GM12878 (cell line): ENCODE measurements at regions of chr5 and their contacts with region 1.

Region 1: GRCh38 chr5:79133657-79134451 is 22.2 kb downstream of the BHMT start:
- DNase-seq: peak; percentile 24
- ATAC-seq: peak; percentile 89
- H3K4me3 ChIP-seq: no peak overlapping the region
- H3K27ac ChIP-seq: no peak overlapping the region
- H3K4me1 ChIP-seq: peaks cover 17% of the 10 kb centered on the region
- H3K27me3 ChIP-seq: no peaks in the 10 kb centered on the region
- CTCF ChIP-seq: peak; percentile 70 to 83 (median 74)
- EP300 ChIP-seq: no peak
- POLR2A ChIP-seq: no peak
- RAD21 ChIP-seq: peak; percentile 93

Region 2: GRCh38 chr5:78824831-78825281 is 309.0 kb before region 1 on chr5:
- CTCF ChIA-PET with region 1: no interaction called
- POLR2A ChIA-PET with region 1: no interaction called
- RAD21 ChIA-PET with region 1: no interaction called
- SMC1A ChIA-PET with region 1: no interaction called
- in situ Hi-C with region 1: no loop called
- intact Hi-C with region 1: no loop called
- DNase-seq: no peak
- ATAC-seq: no peak
- H3K4me3 ChIP-seq: no peak overlapping the region
- H3K27ac ChIP-seq: no peak overlapping the region
- H3K4me1 ChIP-seq: peaks cover 10% of the 10 kb centered on the region
- H3K27me3 ChIP-seq: no peaks in the 10 kb centered on the region
- CTCF ChIP-seq: no peak
- EP300 ChIP-seq: no peak
- POLR2A ChIP-seq: no peak
- RAD21 ChIP-seq: no peak

Region 3: DNA sequence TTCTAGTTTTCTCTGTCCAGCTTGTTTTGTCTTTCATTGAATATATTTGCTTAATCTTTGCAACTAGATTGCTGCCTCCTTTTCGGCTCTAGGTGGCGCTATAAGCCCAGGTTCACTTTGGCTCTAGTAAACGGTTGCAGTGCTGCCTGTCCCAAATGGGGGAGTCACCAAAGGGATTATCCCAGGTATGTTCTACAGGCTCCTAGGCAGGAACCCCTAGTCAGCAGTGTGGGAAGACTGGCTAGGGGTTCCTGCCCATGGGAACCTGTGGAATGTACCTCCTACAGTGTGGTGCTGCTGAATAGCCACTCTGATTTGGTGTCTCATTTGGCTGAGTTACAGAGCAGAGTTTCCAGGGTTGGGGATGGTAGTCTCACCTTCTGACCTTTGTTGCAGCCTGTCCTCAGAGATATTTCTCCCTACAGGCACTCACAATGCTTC is 233.9 kb before region 1 on chr5:
- CTCF ChIA-PET with region 1: interaction called, 84 read pairs
- POLR2A ChIA-PET with region 1: no interaction called
- RAD21 ChIA-PET with region 1: interaction called, 30 read pairs
- SMC1A ChIA-PET with region 1: interaction called, 33 read pairs
- in situ Hi-C with region 1: no loop called
- intact Hi-C with region 1: loop called (anchors 2 kb)
- DNase-seq: no peak
- ATAC-seq: peak; percentile 88
- H3K4me3 ChIP-seq: no peak overlapping the region
- H3K27ac ChIP-seq: no peak overlapping the region
- H3K4me1 ChIP-seq: peaks cover 6% of the 10 kb centered on the region
- H3K27me3 ChIP-seq: no peaks in the 10 kb centered on the region
- CTCF ChIP-seq: peak; percentile 65 to 86 (median 77)
- EP300 ChIP-seq: no peak
- POLR2A ChIP-seq: no peak
- RAD21 ChIP-seq: peak; percentile 94

Region 4: GRCh38 chr5:79011219-79011836 is 122.5 kb before region 1 on chr5:
- CTCF ChIA-PET with region 1: interaction called, 13 read pairs
- POLR2A ChIA-PET with region 1: no interaction called
- RAD21 ChIA-PET with region 1: interaction called, 5 read pairs
- SMC1A ChIA-PET with region 1: interaction called, 10 read pairs
- in situ Hi-C with region 1: no loop called
- intact Hi-C with region 1: no loop called
- DNase-seq: no peak
- ATAC-seq: peak; percentile 52
- H3K4me3 ChIP-seq: no peak overlapping the region
- H3K27ac ChIP-seq: no peak overlapping the region
- H3K4me1 ChIP-seq: no peaks in the 10 kb centered on the region
- H3K27me3 ChIP-seq: peaks cover 0 to 1% of the 10 kb centered on the region in 2 experiments; a peak in 1 of 4 replicates
- CTCF ChIP-seq: 0 out of 6 replicates have a peak, but pooled peaks of 1 of the 3 experiments have one; percentile 12
- EP300 ChIP-seq: no peak
- POLR2A ChIP-seq: no peak
- RAD21 ChIP-seq: no peak

Region 5: GRCh38 chr5:79109527-79110492 is 24.0 kb before region 1 on chr5:
- CTCF ChIA-PET with region 1: interaction called, 9 read pairs
- POLR2A ChIA-PET with region 1: interaction called, 3 read pairs
- RAD21 ChIA-PET with region 1: interaction called, 3 read pairs
- SMC1A ChIA-PET with region 1: interaction called, 17 read pairs
- in situ Hi-C with region 1: no loop called
- intact Hi-C with region 1: no loop called
- DNase-seq: no peak
- ATAC-seq: peak; percentile 75
- H3K4me3 ChIP-seq: no peak overlapping the region
- H3K27ac ChIP-seq: no peak overlapping the region
- H3K4me1 ChIP-seq: no peaks in the 10 kb centered on the region
- H3K27me3 ChIP-seq: peaks cover 4 to 8% of the 10 kb centered on the region in 2 experiments
- CTCF ChIP-seq: peak; percentile 55 to 68 (median 68)
- EP300 ChIP-seq: no peak
- POLR2A ChIP-seq: no peak
- RAD21 ChIP-seq: peak; percentile 41

Region 6: GRCh38 chr5:79191457-79191856 is 57.6 kb after region 1 on chr5:
- CTCF ChIA-PET with region 1: interaction called, 9 read pairs
- POLR2A ChIA-PET with region 1: no interaction called
- RAD21 ChIA-PET with region 1: interaction called, 4 read pairs
- SMC1A ChIA-PET with region 1: interaction called, 10 read pairs
- in situ Hi-C with region 1: no loop called
- intact Hi-C with region 1: no loop called
- DNase-seq: no peak
- ATAC-seq: 0 out of 3 replicates have a peak, but pooled peaks have one; percentile 30
- H3K4me3 ChIP-seq: no peak overlapping the region
- H3K27ac ChIP-seq: no peak overlapping the region
- H3K4me1 ChIP-seq: no peaks in the 10 kb centered on the region
- H3K27me3 ChIP-seq: no peaks in the 10 kb centered on the region
- CTCF ChIP-seq: peak in 2 of 3 experiments; percentile 22 to 24; a peak in 1 of 6 replicates
- EP300 ChIP-seq: no peak
- POLR2A ChIP-seq: no peak
- RAD21 ChIP-seq: peak; percentile 8; the same call in 1 of the 2 replicates

Region 7: GRCh38 chr5:79241535-79241979 is 107.7 kb after region 1 on chr5:
- CTCF ChIA-PET with region 1: interaction called, 22 read pairs
- POLR2A ChIA-PET with region 1: interaction called, 3 read pairs
- RAD21 ChIA-PET with region 1: interaction called, 10 read pairs
- SMC1A ChIA-PET with region 1: interaction called, 7 read pairs
- in situ Hi-C with region 1: no loop called
- intact Hi-C with region 1: no loop called
- DNase-seq: no peak
- ATAC-seq: peak; percentile 24
- H3K4me3 ChIP-seq: peak overlapping the region; percentile 9; the same call in 1 of the 2 replicates
- H3K27ac ChIP-seq: peak overlapping the region; percentile 4; the same call in 1 of the 2 replicates
- H3K4me1 ChIP-seq: peaks cover 8% of the 10 kb centered on the region
- H3K27me3 ChIP-seq: no peaks in the 10 kb centered on the region
- CTCF ChIP-seq: no peak
- EP300 ChIP-seq: no peak
- POLR2A ChIP-seq: no peak
- RAD21 ChIP-seq: no peak

Region 8: GRCh38 chr5:79974891-79975290 is 841.0 kb after region 1 on chr5:
- CTCF ChIA-PET with region 1: no interaction called
- POLR2A ChIA-PET with region 1: no interaction called
- RAD21 ChIA-PET with region 1: no interaction called
- SMC1A ChIA-PET with region 1: no interaction called
- in situ Hi-C with region 1: no loop called
- intact Hi-C with region 1: no loop called
- DNase-seq: no peak
- ATAC-seq: no peak
- H3K4me3 ChIP-seq: no peak overlapping the region
- H3K27ac ChIP-seq: no peak overlapping the region
- H3K4me1 ChIP-seq: no peaks in the 10 kb centered on the region
- H3K27me3 ChIP-seq: no peaks in the 10 kb centered on the region
- CTCF ChIP-seq: no peak
- EP300 ChIP-seq: no peak
- POLR2A ChIP-seq: no peak
- RAD21 ChIP-seq: no peak